ENCODE measurements at regions of chr2 and their contacts with region 1.

Region 1: GRCh38 chr2:135004005-135004746 is 43.1 kb downstream of the MAP3K19 start:
- DNase-seq: peak; percentile 53 to 88 (median 72)
- ATAC-seq: peak; percentile 100
- H3K4me3 ChIP-seq: no peak overlapping the region
- H3K27ac ChIP-seq: no peak overlapping the region
- H3K4me1 ChIP-seq: peaks cover 0 to 6% of the 10 kb centered on the region in 2 donors
- H3K27me3 ChIP-seq: peaks cover 9 to 28% of the 10 kb centered on the region in 2 donors
- CTCF ChIP-seq: peak; percentile 84 to 89

Region 2: GRCh38 chr2:134282629-134283400 is 721.4 kb before region 1 on chr2:
- intact Hi-C with region 1: no loop called
- DNase-seq: no peak
- ATAC-seq: no peak
- H3K4me3 ChIP-seq: no peak overlapping the region
- H3K27ac ChIP-seq: no peak overlapping the region
- H3K4me1 ChIP-seq: peaks cover 0 to 4% of the 10 kb centered on the region in 2 donors
- H3K27me3 ChIP-seq: no peaks in the 10 kb centered on the region
- CTCF ChIP-seq: no peak

Region 3: GRCh38 chr2:135132314-135132713 is 128.1 kb after region 1 on chr2:
- intact Hi-C with region 1: no loop called
- DNase-seq: no peak
- ATAC-seq: no peak
- H3K4me3 ChIP-seq: no peak overlapping the region
- H3K27ac ChIP-seq: no peak overlapping the region
- H3K4me1 ChIP-seq: no peaks in the 10 kb centered on the region
- H3K27me3 ChIP-seq: no peaks in the 10 kb centered on the region
- CTCF ChIP-seq: no peak

Region 4: DNA sequence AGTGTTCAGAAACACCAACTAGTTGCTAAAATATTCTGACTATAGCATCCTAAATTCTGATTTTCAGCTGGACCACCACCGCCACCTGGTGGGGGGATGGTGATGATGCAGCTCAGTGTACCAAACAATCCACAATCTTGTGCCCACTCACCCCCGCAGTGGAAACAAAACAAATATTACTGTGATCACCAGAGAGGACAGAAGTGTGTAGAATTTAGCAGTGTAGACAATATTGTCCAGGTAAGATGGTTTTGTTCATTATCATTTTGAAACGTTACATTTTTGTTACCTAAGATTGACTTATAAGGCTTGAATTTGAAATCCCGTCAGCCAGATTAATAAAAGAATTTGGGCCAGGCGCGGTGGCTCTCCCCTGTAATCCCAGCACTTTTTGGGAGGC is 705.8 kb after region 1 on chr2:
- intact Hi-C with region 1: loop called in 1 of 2 experiments (anchors 5 kb)
- DNase-seq: peak in 3 of 4 donors; percentile 35 to 65 (median 37)
- ATAC-seq: peak; percentile 82
- H3K4me3 ChIP-seq: no peak overlapping the region
- H3K27ac ChIP-seq: no peak overlapping the region
- H3K4me1 ChIP-seq: no peaks in the 10 kb centered on the region
- H3K27me3 ChIP-seq: no peaks in the 10 kb centered on the region
- CTCF ChIP-seq: peak; percentile 88 to 92

Region 5: DNA sequence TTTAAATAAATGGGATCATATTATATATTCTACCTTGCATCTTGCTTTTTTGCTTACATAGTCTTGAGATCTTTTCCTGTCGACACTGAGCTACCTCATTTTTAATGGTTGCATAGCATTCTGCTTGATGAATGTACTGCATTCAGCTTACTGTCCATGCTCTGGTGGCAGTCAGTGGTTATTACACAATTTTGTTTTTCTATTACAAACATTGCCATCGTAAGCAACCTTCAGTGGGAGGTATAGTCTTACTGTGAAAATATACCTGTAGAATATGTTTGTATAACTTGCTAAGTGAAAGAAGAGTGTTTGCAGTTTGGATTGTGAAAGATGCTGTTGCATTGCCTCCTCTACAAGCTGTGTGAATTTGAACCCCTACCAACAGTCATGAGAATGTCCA is 780.9 kb after region 1 on chr2:
- intact Hi-C with region 1: no loop called
- DNase-seq: no peak
- ATAC-seq: no peak
- H3K4me3 ChIP-seq: no peak overlapping the region
- H3K27ac ChIP-seq: no peak overlapping the region
- H3K4me1 ChIP-seq: no peaks in the 10 kb centered on the region
- H3K27me3 ChIP-seq: no peaks in the 10 kb centered on the region
- CTCF ChIP-seq: no peak